Left colon (tissue), 2 donors: ENCODE measurements at regions of chr20 and their contacts with region 1.

Region 1: DNA sequence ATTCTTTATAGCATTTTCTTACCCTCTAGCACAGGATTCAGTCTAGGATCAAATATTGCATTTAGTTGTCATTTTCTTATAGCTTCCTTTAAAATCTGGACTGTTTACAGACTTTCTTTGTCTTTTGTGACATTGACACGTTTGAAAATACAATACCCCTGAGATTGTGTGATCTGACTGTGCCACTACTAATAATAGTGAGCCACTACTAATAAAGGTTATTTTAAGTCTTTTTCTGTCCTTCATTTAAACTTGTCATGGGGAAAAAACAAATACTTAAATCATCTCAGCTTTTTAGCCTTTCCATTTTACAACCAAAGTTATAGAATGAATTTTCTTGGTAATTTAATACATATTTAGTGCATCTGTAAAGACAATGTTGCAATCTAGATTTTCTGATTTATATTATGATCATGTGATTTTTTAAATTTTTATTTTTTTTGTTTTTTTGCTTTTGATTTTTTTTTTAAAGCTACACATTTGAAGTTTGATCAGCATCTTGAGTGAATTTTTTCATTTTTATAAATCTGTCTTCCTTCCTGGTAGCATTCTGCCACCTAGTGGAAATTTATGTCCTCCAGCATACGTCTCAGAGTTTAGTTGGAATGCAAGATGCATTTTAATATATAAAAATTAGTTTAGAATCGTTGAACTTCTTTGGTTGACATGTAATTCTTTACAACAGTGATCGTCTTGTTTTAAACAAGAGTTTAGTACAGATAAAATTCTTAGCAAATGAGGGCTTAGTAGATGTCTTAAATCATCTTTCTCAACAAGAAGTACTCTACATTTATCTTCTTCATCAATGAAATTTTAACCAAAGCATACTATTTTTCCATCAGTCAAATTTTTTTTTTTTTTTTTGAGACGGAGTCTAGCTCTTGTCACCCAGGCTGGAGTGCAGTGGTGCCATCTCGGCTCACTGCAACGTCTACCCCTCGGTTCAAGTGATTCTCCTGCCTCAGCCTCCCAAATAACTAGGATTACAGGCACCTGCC is 119.4 kb downstream of the NCOA3 start:
- DNase-seq: no peak
- ATAC-seq: peak; percentile 65

Region 2: DNA sequence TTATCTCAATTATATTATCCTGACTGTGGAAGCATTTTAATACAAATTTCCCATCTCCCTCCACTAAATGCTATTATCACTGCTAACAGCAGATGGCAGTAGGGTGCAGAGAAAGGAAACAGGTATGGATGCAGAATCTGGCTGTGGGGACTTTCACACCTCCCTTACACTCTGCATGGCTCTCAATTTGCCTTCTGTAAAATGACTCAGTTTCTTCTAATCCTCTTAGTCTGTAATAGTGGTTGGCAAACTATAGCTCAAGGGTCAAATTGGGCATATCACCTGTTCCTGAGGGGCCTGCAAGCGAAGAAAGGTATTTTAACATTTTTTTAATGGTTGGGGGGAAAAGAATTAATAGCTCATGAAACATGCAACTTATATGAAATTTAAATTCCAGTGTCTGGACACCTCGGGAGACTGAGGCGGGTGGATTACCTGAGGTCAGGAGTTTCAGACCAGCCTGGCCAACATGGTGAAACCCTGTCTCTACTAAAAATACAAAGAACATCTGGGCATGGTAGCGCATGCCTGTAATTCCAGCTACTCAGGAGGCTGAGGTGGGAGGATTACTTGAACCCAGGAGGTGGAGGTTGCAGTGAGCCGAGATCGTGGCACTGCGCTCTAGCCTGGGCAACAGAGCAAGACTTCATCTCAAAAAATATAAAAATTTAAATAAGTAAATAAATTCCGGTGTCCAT is 348.1 kb before region 1 on chr20:
- intact Hi-C with region 1: loop called in 1 of 2 experiments (anchors 5 kb)
- DNase-seq: peak in 1 of 2 donors; percentile 18
- ATAC-seq: peak; percentile 76

Region 3: GRCh38 chr20:47389867-47390347 is 231.2 kb before region 1 on chr20:
- intact Hi-C with region 1: loop called in 1 of 2 experiments (anchors 10 kb)
- DNase-seq: no peak
- ATAC-seq: no peak

Region 4: DNA sequence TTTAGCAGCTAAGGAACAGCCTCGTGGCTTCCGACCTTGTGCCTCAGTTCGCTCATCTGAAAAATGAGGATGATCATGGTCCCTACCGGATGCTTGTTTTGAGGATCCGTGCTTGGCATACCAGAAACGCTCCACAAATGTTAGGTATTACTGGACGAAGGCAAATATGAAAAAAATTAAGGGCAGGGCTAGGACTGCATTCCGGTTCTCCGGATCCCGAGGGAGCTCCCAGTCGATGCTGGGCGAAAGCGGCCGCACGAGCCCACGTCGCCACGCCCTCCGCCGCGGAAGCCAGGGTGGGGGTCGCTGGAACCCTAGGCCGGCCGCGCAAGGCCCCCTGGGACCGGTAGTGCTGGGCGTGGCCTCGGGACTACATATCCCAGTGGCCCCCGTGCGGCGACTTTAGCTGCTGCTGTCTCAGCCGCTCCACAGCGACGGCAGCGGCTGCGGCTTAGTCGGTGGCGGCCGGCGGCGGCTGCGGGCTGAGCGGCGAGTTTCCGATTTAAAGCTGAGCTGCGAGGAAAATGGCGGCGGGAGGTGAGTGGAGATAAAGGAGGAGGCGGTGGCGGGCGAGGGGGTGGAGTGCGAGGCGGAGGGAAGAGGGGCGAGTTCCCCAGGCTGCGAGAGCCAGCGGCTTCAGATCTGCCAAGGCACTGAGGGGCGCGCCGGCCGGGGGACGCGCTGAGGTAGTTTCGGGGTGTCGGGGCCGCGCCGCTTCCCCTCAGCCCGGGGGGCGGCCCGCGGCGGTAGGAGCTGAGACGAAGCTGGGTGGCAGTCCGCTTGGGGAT is 119.4 kb before region 1 on chr20 and contains the start of gene NCOA3:
- intact Hi-C with region 1: loop called in 1 of 2 experiments (anchors 5 kb)
- DNase-seq: peak; percentile 96 to 99
- ATAC-seq: peak; percentile 91
- total RNA-seq, gene NCOA3: 22.9 to 23.6 TPM

Region 5: GRCh38 chr20:47568001-47568407 is 53.1 kb before region 1 on chr20:
- intact Hi-C with region 1: no loop called
- DNase-seq: no peak
- ATAC-seq: peak; percentile 75